ENCODE measurements at regions of chr1 and their contacts with region 1.

Region 1: GRCh38 chr1:39258146-39258924 is 53.8 kb downstream of the MACF1 start:
- DNase-seq: no peak
- ATAC-seq: peak; percentile 81 to 88
- H3K4me3 ChIP-seq: no peak overlapping the region
- H3K27ac ChIP-seq: no peak overlapping the region
- H3K4me1 ChIP-seq: peaks cover 28% of the 10 kb centered on the region
- H3K27me3 ChIP-seq: no peaks in the 10 kb centered on the region
- CTCF ChIP-seq: peak; percentile 81

Region 2: DNA sequence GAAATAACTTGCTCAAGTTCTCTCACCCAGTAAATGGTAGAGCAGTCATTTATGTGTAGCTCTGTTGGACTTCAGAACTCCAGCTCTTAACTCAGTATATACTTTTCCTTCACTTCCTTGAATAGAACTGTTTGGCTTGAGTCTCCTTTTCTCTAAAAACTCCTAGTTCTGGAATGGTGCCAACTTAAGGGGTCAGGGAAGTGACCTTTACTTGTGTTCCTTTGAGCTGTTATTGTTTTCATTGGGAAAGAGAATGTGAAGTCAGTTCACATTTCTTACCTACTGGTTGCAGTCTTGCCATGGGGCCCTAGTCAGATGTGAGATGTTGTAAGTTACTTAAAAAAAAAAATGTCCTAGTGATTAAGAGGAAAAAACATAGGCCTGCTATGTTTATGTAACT is 130.8 kb before region 1 on chr1:
- intact Hi-C with region 1: no loop called
- DNase-seq: no peak
- ATAC-seq: peak in 1 of 2 donors; percentile 12
- H3K4me3 ChIP-seq: no peak overlapping the region
- H3K27ac ChIP-seq: peak overlapping the region; percentile 83
- H3K4me1 ChIP-seq: peaks cover 75% of the 10 kb centered on the region
- H3K27me3 ChIP-seq: no peaks in the 10 kb centered on the region
- CTCF ChIP-seq: no peak

Region 3: GRCh38 chr1:39204441-39205081 is 53.8 kb before region 1 on chr1 and contains the start of gene MACF1:
- intact Hi-C with region 1: loop called (anchors 10 kb)
- DNase-seq: no peak
- ATAC-seq: peak; percentile 73 to 75
- H3K4me3 ChIP-seq: peak within 1 kb of the TSS; percentile 38
- H3K27ac ChIP-seq: peak within 1 kb of the TSS; percentile 80
- H3K4me1 ChIP-seq: peaks cover 55% of the 10 kb centered on the region
- H3K27me3 ChIP-seq: no peaks in the 10 kb centered on the region
- CTCF ChIP-seq: peak; percentile 32
- total RNA-seq, gene MACF1: 506 TPM